ENCODE measurements at regions of chr2 and their contacts with region 1.

Region 1: DNA sequence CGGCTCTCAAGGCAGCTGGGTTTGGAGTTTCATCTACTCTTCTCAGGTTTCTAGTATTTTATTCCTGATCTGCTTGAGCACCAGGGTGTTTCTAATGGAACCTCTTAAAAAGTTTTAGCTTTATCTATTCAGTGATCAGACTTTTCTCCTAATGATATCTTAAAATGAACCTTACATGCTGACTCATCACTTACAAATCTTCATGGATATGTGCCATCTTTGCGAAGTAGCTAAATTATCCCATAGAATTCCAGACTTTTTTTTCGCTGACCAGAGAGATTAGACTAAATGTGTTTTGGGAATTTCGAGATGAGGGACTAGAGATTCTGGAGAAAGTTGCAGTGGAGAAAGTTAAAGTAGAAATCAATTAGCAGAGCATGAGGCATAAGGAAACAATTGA is 401.0 kb downstream of the GRB14 start:
- DNase-seq: no peak
- H3K4me3 ChIP-seq: no peak overlapping the region
- H3K4me3 Mint-ChIP-seq: no peak overlapping the region
- H3K27ac Mint-ChIP-seq: no peak overlapping the region
- H3K4me1 ChIP-seq: no peaks in the 10 kb centered on the region
- H3K4me1 Mint-ChIP-seq: no peaks in the 10 kb centered on the region
- H3K27me3 ChIP-seq: no peaks in the 10 kb centered on the region
- H3K27me3 Mint-ChIP-seq: no peaks in the 10 kb centered on the region
- CTCF ChIP-seq: no peak

Region 2: DNA sequence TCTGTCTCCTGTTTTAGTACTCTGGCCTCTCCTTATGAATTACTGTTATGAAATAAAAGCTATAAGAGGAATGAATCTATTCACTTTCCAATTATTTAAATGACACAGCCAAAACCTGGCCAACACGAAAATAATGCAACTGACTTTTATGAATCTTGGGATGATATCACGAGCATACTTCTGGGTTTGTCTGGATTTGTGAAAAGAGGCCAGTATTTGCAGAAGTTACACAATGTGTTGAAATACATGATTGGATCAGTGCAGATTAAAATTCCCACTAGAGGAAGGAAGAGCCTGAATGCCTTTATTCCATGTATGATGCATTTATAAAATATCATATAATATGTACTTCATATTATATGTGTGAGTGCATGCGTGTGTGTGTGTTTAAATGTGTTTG is 17.1 kb before region 1 on chr2:
- CTCF ChIA-PET with region 1: no interaction called
- POLR2A ChIA-PET with region 1: interaction called, 13 read pairs
- intact Hi-C with region 1: no loop called
- DNase-seq: no peak
- H3K4me3 ChIP-seq: no peak overlapping the region
- H3K4me3 Mint-ChIP-seq: no peak overlapping the region
- H3K27ac Mint-ChIP-seq: no peak overlapping the region
- H3K4me1 ChIP-seq: no peaks in the 10 kb centered on the region
- H3K4me1 Mint-ChIP-seq: no peaks in the 10 kb centered on the region
- H3K27me3 ChIP-seq: no peaks in the 10 kb centered on the region
- H3K27me3 Mint-ChIP-seq: no peaks in the 10 kb centered on the region
- CTCF ChIP-seq: no peak

Measured in Caco-2 (cell line).